ENCODE measurements at regions of chr12 and their contacts with region 1.

Region 1: DNA sequence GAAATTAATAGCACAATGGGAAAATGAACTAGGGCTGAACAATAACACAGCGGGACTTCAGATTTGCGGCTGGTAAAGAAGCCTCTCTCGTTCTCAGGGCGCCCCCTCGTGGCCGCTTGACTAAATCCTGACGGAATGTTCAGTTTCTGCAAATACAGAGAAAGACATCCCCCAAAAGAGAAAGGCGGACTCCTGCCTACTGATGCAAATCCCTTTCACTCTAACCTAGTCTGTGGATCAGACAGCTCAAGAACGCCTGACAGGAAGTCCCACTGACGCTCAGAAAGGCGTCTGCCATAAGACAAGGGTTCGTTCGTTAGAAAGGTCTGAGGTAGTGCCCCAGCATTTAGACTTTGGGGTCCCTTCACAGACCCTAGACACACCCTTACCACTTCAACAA is 2.5 kb downstream of the NUAK1 start:
- DNase-seq: peak; percentile 92
- ATAC-seq: peak; percentile 15

Region 2: DNA sequence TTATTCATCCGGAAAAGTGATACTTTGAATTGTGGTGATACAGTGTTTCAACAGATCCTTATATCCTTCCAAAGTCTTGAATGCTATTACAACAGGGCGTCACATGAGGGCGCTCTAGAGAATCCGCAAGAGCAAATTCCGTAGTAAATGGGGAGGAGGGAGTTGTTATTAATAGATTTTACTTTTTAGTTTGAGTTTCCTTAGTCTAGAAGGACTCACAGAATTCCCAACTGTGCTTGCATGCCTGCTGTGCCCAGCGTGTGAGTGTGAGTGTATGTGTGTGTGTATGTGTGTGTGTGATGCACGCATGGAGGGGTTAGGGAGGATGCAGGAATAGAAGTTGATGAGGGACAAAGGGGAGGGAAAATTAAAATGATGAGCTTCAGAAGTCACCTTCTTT is 430.5 kb before region 1 on chr12:
- intact Hi-C with region 1: loop called (anchors 1 kb)
- DNase-seq: no peak
- ATAC-seq: peak; percentile 48

Region 3: DNA sequence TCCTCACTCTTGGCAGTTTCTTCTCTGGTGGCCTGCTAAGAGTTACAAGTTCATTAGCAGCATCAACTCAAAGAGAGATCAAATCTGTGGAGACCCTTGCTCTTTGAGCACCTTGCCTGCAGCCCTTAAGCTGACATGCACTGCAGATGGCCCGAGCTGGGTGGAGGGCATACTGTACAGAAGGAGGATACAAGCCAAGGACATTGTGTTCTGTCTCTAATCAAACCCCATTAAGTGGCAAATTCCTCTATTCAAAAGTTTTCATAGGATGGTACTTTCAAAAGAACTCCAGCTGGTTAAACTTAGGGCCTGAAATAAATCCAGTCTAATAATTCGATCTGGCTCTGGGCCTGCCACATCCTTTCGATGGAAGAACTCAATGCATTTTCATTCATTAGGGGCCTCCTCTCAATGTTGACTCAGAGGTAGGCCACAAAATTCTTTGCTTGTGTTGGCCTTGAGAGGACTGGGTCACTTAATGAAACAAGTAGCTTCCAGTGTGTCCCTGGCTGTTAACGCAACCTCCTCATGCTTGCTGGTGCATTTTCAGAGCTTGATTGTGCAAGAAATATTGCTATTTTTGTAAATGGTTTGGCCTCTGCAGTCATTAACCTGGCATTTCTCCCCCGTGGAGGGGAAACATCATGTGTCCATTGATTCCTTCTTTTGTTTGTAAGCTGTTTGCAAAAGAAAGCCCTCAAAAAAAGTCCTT is 315.7 kb before region 1 on chr12:
- intact Hi-C with region 1: loop called (anchors 5 kb)
- DNase-seq: no peak
- ATAC-seq: peak; percentile 82

Region 4: GRCh38 chr12:105967038-105967776 is 169.1 kb before region 1 on chr12:
- intact Hi-C with region 1: loop called (anchors 2 kb)
- DNase-seq: no peak
- ATAC-seq: peak; percentile 68

Region 5: DNA sequence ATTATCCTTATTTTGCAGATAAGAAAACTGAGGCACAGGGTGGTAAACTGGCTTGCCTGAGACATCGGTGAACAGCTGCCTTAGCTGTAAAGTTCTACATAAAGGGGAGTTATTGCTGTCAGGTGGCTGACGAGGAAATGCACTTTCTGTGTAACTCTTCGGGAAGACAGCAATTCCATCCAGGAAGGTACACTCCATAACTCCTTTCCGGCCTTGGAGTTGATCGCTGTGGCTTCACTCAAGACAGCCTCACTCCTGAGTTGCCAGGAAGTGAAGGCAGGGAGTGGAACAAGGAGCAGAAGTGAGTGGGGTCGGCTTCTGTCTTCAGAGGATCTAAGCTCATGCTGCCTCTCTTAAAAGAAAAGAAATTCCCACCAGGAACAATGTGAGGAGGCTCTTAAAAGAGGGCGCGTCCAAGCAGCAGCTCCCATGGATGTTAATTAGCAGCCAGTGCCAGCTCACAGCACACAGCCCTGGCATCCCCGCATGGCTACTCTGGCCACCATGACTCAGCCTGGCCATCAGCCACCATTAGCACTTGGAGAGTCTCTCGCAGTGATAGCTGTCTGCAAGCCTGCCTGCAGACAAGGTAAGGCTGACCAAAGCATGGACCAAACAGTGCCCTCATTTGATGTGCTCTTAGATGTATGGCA is 57.8 kb before region 1 on chr12:
- intact Hi-C with region 1: loop called (anchors 2 kb)
- DNase-seq: no peak
- ATAC-seq: peak; percentile 75

Region 6: GRCh38 chr12:106223485-106224354 is 87.5 kb after region 1 on chr12:
- intact Hi-C with region 1: loop called (anchors 5 kb)
- DNase-seq: peak; percentile 79
- ATAC-seq: peak; percentile 87

Measured in Right ventricle myocardium inferior (tissue), 1 donor.